A549 (cell line): ENCODE measurements at regions of chr1 and their contacts with region 1.

Region 1: DNA sequence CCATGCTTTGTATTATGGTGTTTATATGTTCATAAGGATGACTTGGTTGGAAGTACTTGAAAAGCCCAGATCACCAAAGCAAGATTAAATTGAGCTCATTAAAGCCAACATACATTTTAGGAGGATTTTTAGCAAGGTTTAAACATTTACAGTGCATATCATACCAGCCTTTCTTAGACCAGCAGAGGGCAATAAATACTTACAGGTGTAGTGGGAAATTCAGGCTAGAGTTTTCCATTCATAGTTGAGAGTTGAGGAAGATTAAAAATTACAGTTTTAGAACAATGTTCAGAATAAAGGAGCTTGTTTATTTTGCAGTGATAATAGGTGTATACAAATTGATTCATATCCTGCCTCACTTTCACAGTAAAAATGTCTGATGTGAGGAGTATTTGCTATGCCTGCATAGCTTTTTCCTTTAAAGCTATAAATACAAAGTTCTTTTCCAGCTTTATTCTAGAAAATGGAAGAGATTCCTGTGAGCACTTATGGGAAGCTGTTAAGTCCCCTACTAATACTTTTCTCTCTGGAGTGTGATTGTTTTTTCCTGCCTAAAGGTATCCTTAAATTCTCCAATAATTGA is 35.3 kb downstream of the DTL start:
- DNase-seq: peak; percentile 14 to 43
- ATAC-seq: peak; percentile 74 to 80; a peak in 4 of 6 replicates
- H3K4me3 ChIP-seq: no peak overlapping the region
- H3K27ac ChIP-seq: no peak overlapping the region
- H3K4me1 ChIP-seq: no peaks in the 10 kb centered on the region
- CTCF ChIP-seq: peak; percentile 80
- EP300 ChIP-seq: no peak
- POLR2A ChIP-seq: no peak
- RAD21 ChIP-seq: peak; percentile 78 to 88

Region 2: DNA sequence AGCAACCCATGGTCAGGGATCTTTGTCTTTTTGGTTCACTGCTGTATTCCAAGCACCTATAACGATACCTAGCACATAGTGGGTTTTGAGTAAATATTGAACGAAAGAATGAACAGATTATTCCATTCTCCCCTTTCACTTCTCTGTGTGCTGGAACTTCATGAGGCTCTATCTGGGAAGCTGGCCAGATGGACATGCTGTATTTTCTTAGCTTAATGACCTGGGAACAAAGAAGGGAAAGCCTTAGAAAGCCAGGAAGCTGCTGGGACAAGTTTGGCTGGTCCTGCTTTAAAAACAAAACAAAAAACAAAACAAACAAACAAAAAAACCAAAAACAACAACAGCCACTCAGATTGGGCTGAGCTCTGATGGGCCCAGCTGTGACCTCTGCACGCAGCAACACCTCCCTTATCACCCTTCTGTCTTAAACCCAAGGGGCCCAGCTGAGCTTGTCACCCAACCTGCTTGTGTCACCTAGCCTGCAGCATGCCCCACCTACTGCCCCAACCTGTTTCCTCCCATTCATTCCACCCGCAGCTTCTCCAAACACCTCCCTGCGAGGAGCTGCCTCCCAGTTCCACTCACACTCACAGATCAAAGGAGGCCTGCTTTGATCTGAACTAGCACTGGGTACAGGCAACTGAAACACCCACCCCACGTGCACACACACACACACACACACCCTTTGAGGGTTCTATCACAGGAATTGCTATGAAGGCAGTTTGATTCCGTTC is 528.9 kb before region 1 on chr1:
- CTCF ChIA-PET with region 1: no interaction called
- POLR2A ChIA-PET with region 1: no interaction called
- DNase-seq: no peak
- ATAC-seq: no peak
- H3K4me3 ChIP-seq: no peak overlapping the region
- H3K27ac ChIP-seq: no peak overlapping the region
- H3K4me1 ChIP-seq: no peaks in the 10 kb centered on the region
- CTCF ChIP-seq: no peak
- EP300 ChIP-seq: no peak
- POLR2A ChIP-seq: no peak
- RAD21 ChIP-seq: no peak

Region 3: GRCh38 chr1:211965108-211965805 is 105.6 kb before region 1 on chr1:
- CTCF ChIA-PET with region 1: no interaction called
- POLR2A ChIA-PET with region 1: no interaction called
- DNase-seq: no peak
- ATAC-seq: no peak
- H3K4me3 ChIP-seq: no peak overlapping the region
- H3K27ac ChIP-seq: no peak overlapping the region
- H3K4me1 ChIP-seq: no peaks in the 10 kb centered on the region
- CTCF ChIP-seq: no peak
- EP300 ChIP-seq: no peak
- POLR2A ChIP-seq: no peak
- RAD21 ChIP-seq: no peak

Region 4: GRCh38 chr1:212035123-212035834 is 35.5 kb before region 1 on chr1 and contains the starts of genes DTL and INTS7:
- CTCF ChIA-PET with region 1: interaction called, 14 read pairs
- POLR2A ChIA-PET with region 1: interaction called, 3 read pairs
- DNase-seq: peak; percentile 99
- ATAC-seq: peak; percentile 87 to 92
- H3K4me3 ChIP-seq: peak within 1 kb of the TSS; percentile 65
- H3K27ac ChIP-seq: peak within 1 kb of the TSS; percentile 85 to 90
- H3K4me1 ChIP-seq: peaks cover 72% of the 10 kb centered on the region
- CTCF ChIP-seq: peak; percentile 94
- EP300 ChIP-seq: no peak
- POLR2A ChIP-seq: peak; percentile 73
- RAD21 ChIP-seq: peak in 1 of 2 experiments; percentile 30; a peak in 2 of 5 replicates
- polyA plus RNA-seq, gene DTL: 28.5 and 30.2 TPM in 2 replicates
- polyA plus RNA-seq, gene INTS7: 47.2 and 61.8 TPM in 2 replicates

Region 5: GRCh38 chr1:212082765-212083406 is 12.1 kb after region 1 on chr1:
- CTCF ChIA-PET with region 1: interaction called, 28 read pairs
- POLR2A ChIA-PET with region 1: no interaction called
- DNase-seq: no peak
- ATAC-seq: no peak
- H3K4me3 ChIP-seq: no peak overlapping the region
- H3K27ac ChIP-seq: no peak overlapping the region
- H3K4me1 ChIP-seq: no peaks in the 10 kb centered on the region
- CTCF ChIP-seq: no peak
- EP300 ChIP-seq: no peak
- POLR2A ChIP-seq: no peak
- RAD21 ChIP-seq: no peak

Region 6: GRCh38 chr1:212284744-212285684 is 214.2 kb after region 1 on chr1 and contains the start of gene PPP2R5A:
- CTCF ChIA-PET with region 1: interaction called, 105 read pairs
- POLR2A ChIA-PET with region 1: interaction called, 4 read pairs
- DNase-seq: peak; percentile 98 to 100
- ATAC-seq: peak; percentile 89 to 96
- H3K4me3 ChIP-seq: peak within 1 kb of the TSS; percentile 82
- H3K27ac ChIP-seq: peak within 1 kb of the TSS; percentile 93 to 96
- H3K4me1 ChIP-seq: peaks cover 32% of the 10 kb centered on the region
- CTCF ChIP-seq: peak; percentile 46
- EP300 ChIP-seq: no peak; a peak in 1 of 5 replicates
- POLR2A ChIP-seq: peak; percentile 83
- RAD21 ChIP-seq: no peak; a peak in 1 of 5 replicates
- polyA plus RNA-seq, gene PPP2R5A: 33.6 and 37.6 TPM in 2 replicates

Region 7: GRCh38 chr1:212301580-212301979 is 230.8 kb after region 1 on chr1:
- CTCF ChIA-PET with region 1: interaction called, 105 read pairs
- POLR2A ChIA-PET with region 1: no interaction called
- DNase-seq: no peak
- ATAC-seq: no peak
- H3K4me3 ChIP-seq: no peak overlapping the region
- H3K27ac ChIP-seq: no peak overlapping the region
- H3K4me1 ChIP-seq: no peaks in the 10 kb centered on the region
- CTCF ChIP-seq: no peak
- EP300 ChIP-seq: no peak
- POLR2A ChIP-seq: no peak
- RAD21 ChIP-seq: no peak

Region 8: GRCh38 chr1:212346601-212347000 is 275.8 kb after region 1 on chr1:
- CTCF ChIA-PET with region 1: interaction called, 12 read pairs
- POLR2A ChIA-PET with region 1: no interaction called
- DNase-seq: no peak
- ATAC-seq: no peak
- H3K4me3 ChIP-seq: no peak overlapping the region
- H3K27ac ChIP-seq: no peak overlapping the region
- H3K4me1 ChIP-seq: no peaks in the 10 kb centered on the region
- CTCF ChIP-seq: no peak
- EP300 ChIP-seq: no peak
- POLR2A ChIP-seq: no peak
- RAD21 ChIP-seq: no peak

Region 9: GRCh38 chr1:212463565-212464285 is 392.9 kb after region 1 on chr1:
- CTCF ChIA-PET with region 1: interaction called, 230 read pairs
- POLR2A ChIA-PET with region 1: no interaction called
- DNase-seq: no peak
- ATAC-seq: 0 out of 6 replicates have a peak, but pooled peaks of 1 of the 2 experiments have one; percentile 25
- H3K4me3 ChIP-seq: no peak overlapping the region
- H3K27ac ChIP-seq: no peak overlapping the region
- H3K4me1 ChIP-seq: no peaks in the 10 kb centered on the region
- CTCF ChIP-seq: no peak
- EP300 ChIP-seq: no peak
- POLR2A ChIP-seq: no peak
- RAD21 ChIP-seq: no peak